ENCODE measurements at regions of chr14 and their contacts with region 1.

Region 1: GRCh38 chr14:22319526-22320361 is 269.3 kb downstream of the DAD1 start:
- DNase-seq: peak; percentile 76
- H3K4me3 ChIP-seq: no peak overlapping the region
- H3K27ac ChIP-seq: no peak overlapping the region
- H3K4me1 ChIP-seq: no peaks in the 10 kb centered on the region
- H3K27me3 ChIP-seq: no peaks in the 10 kb centered on the region
- CTCF ChIP-seq: peak; percentile 46 to 75 (median 68)
- POLR2A ChIP-seq: no peak

Region 2: DNA sequence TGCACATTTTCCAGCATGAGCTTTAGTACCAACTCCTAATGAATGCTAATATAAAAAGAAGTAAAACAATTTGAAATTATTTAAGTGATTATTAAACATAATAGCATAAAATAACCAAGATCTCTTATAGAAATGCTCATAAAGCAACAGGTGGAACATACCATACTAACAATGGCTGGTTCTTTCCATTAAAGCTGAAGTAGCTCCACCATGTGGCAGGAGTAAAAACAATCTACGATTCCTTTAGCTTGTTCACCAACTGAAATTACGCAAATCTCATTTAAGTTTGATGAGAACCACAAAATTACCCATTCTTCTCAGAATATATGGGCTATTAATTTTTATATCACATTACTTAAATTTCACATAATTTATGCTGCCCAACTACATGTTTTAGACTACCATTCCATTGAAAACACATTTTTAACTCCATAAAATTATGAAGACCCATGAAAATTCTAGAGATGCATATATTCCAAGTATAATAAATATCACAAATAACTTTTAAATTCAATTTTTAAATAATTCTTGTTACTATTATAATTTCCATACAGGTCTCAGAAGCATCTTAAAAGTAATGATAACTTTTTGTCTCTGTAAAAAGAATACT is 55.7 kb after region 1 on chr14:
- intact Hi-C with region 1: loop called (anchors 10 kb)
- DNase-seq: no peak
- H3K4me3 ChIP-seq: no peak overlapping the region
- H3K27ac ChIP-seq: no peak overlapping the region
- H3K4me1 ChIP-seq: no peaks in the 10 kb centered on the region
- H3K27me3 ChIP-seq: no peaks in the 10 kb centered on the region
- CTCF ChIP-seq: peak; percentile 21 to 55 (median 30)
- POLR2A ChIP-seq: no peak

Region 3: GRCh38 chr14:22403281-22403680 is 83.5 kb after region 1 on chr14:
- intact Hi-C with region 1: no loop called
- DNase-seq: no peak
- H3K4me3 ChIP-seq: no peak overlapping the region
- H3K27ac ChIP-seq: no peak overlapping the region
- H3K4me1 ChIP-seq: no peaks in the 10 kb centered on the region
- H3K27me3 ChIP-seq: no peaks in the 10 kb centered on the region
- CTCF ChIP-seq: no peak
- POLR2A ChIP-seq: no peak

Measured in testis (tissue), 5 donors.